ENCODE measurements at regions of chr15 and their contacts with region 1.

Region 1: GRCh38 chr15:56919609-56920366 is 1.3 kb downstream of the TCF12 start:
- DNase-seq: no peak
- H3K4me3 ChIP-seq: peak overlapping the region; percentile 61 to 96 (median 92)
- H3K27ac ChIP-seq: peak overlapping the region; percentile 91 to 97 (median 94)
- H3K4me1 ChIP-seq: peaks cover 18 to 73% (median 60%) of the 10 kb centered on the region in 6 donors
- H3K27me3 ChIP-seq: no peaks in the 10 kb centered on the region
- CTCF ChIP-seq: no peak
- POLR2A ChIP-seq: no peak

Region 2: DNA sequence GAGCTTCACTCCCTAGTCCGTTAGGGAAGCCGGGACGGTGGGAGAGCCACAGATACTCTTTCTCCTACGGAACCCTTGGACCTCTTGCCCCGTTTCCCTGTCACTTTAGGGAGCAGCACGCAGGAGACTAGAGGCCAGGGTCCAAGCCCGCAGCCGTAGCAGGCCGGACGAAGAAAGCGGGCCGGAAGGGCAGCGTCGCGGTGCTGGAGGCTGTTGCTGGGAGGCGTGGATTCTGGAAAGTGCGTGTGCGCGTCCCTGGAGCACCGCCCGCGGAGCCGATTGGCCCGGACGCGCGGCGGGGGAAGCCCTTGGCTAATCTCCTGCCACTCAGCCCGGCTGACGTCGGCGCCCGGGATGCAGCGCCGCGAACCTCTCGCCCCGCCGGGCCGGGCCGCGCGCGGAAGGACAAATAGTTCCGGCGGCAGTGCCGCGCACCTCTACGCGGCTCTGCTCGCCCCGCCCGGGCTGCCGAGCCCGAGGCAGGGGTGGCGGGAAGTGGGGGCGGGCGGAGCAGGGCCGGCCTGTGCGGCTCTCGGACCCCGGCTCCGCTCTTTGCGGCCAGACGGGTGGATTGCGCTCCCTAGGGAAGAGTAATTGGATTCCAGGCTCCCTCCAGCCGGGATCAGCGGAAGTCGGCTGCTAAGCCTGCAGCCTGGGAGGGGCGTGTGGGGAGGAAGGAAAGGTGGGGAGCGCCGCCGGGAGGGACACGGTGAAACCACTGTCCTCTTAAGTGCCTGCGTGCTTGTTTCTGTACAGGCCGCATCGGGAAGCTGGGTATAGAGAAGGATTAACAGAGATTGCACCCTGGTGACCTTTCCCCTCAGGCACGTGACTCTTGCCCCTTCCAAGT is 32.6 kb before region 1 on chr15:
- intact Hi-C with region 1: loop called (anchors 1 kb)
- DNase-seq: peak; percentile 96
- H3K4me3 ChIP-seq: peak overlapping the region; percentile 55 to 86 (median 67)
- H3K27ac ChIP-seq: peak overlapping the region; percentile 94 to 98 (median 97)
- H3K4me1 ChIP-seq: peaks cover 8 to 34% (median 25%) of the 10 kb centered on the region in 6 donors
- H3K27me3 ChIP-seq: no peaks in the 10 kb centered on the region
- CTCF ChIP-seq: peak in 2 of 11 experiments; percentile 21 to 28
- POLR2A ChIP-seq: peak in 1 of 3 donors; percentile 51

Measured in spleen (tissue), 13 donors.